ENCODE measurements at regions of chr5 and their contacts with region 1.

Region 1: GRCh38 chr5:158174918-158175851 is 316.2 kb upstream of the CLINT1 start:
- DNase-seq: peak; percentile 48
- ATAC-seq: peak; percentile 82
- H3K4me3 Mint-ChIP-seq: no peak overlapping the region
- H3K27ac Mint-ChIP-seq: no peak overlapping the region
- H3K4me1 Mint-ChIP-seq: peaks cover 33% of the 10 kb centered on the region
- H3K27me3 Mint-ChIP-seq: no peaks in the 10 kb centered on the region
- CTCF ChIP-seq: peak; percentile 76

Region 2: GRCh38 chr5:157820593-157821252 is 354.5 kb before region 1 on chr5:
- CTCF ChIA-PET with region 1: interaction called, 6 read pairs
- POLR2A ChIA-PET with region 1: no interaction called
- intact Hi-C with region 1: loop called (anchors 5 kb)
- DNase-seq: no peak
- ATAC-seq: no peak
- H3K4me3 Mint-ChIP-seq: no peak overlapping the region
- H3K27ac Mint-ChIP-seq: peak overlapping the region; percentile 12
- H3K4me1 Mint-ChIP-seq: peaks cover 25% of the 10 kb centered on the region
- H3K27me3 Mint-ChIP-seq: no peaks in the 10 kb centered on the region
- CTCF ChIP-seq: no peak

Region 3: GRCh38 chr5:158039911-158040347 is 135.3 kb before region 1 on chr5:
- CTCF ChIA-PET with region 1: no interaction called
- POLR2A ChIA-PET with region 1: no interaction called
- intact Hi-C with region 1: no loop called
- DNase-seq: no peak
- ATAC-seq: no peak
- H3K4me3 Mint-ChIP-seq: no peak overlapping the region
- H3K27ac Mint-ChIP-seq: no peak overlapping the region
- H3K4me1 Mint-ChIP-seq: no peaks in the 10 kb centered on the region
- H3K27me3 Mint-ChIP-seq: peaks cover 2% of the 10 kb centered on the region
- CTCF ChIP-seq: no peak

Region 4: DNA sequence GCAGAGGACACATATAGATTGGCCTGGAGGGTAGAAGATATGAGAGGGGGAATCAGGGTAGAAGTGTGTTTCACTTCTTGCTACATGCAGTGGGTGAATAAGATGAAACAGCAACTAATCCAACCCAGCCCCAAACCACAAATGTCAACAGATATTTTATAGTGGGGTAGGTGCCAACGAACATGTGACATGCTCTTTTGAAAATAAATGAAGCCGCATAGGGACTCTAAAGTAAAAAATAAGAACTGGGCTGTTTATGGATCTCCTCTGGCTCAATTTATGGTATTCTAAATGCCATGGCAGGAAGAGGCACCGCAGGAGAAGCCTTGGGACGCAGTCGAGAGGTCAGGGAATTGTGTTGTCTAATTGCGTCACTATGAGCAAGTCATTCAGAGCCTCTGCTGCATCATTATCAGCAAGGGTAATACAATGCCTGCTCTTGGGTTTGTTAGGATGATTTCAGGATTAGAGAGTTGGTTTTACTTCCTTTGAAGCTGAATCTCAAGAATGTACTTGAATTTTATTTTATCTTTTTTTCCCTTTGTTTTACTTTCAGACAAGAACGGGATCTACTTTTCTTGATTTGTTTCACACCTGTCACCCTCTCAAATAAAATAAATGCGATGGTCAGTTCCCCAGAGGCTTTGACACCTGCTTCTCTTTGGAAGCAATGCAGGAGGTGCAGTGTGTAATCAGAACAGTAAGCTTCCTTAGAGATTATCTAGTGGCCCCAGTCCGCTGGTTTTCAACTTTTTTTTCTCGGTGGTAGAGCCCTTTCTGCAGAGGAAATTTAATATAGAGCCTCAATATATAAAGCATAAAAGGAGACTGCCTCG is 59.4 kb after region 1 on chr5:
- CTCF ChIA-PET with region 1: no interaction called
- POLR2A ChIA-PET with region 1: no interaction called
- intact Hi-C with region 1: loop called (anchors 2 kb)
- DNase-seq: no peak
- ATAC-seq: peak; percentile 34
- H3K4me3 Mint-ChIP-seq: peak overlapping the region; percentile 55
- H3K27ac Mint-ChIP-seq: peak overlapping the region; percentile 68
- H3K4me1 Mint-ChIP-seq: peaks cover 17% of the 10 kb centered on the region
- H3K27me3 Mint-ChIP-seq: no peaks in the 10 kb centered on the region
- CTCF ChIP-seq: no peak

Region 5: GRCh38 chr5:158725297-158725851 is 550.2 kb after region 1 on chr5:
- CTCF ChIA-PET with region 1: no interaction called
- POLR2A ChIA-PET with region 1: no interaction called
- intact Hi-C with region 1: loop called (anchors 1 kb)
- DNase-seq: no peak
- ATAC-seq: no peak
- H3K4me3 Mint-ChIP-seq: no peak overlapping the region
- H3K27ac Mint-ChIP-seq: peak overlapping the region; percentile 19
- H3K4me1 Mint-ChIP-seq: peaks cover 29% of the 10 kb centered on the region
- H3K27me3 Mint-ChIP-seq: no peaks in the 10 kb centered on the region
- CTCF ChIP-seq: no peak

Region 6: DNA sequence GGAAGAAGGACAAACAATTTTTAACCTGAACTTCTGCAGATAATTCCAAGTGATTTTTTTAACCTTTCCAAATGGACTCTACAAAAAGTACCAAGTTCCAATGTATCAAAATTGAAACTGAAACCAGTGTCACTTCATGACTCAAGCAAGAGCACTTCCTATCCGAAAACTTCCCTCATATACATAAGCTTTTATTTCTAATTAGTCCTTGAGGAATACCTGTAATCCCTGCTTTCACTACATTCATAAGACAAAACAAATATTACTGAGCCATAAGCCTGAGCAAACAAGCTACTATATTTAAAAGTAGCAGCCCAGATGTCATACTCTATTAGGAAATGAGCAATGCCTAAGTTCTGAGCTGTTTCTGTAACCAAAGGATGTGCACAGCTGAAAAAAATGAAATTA is 700.1 kb after region 1 on chr5:
- CTCF ChIA-PET with region 1: interaction called, 4 read pairs
- POLR2A ChIA-PET with region 1: no interaction called
- intact Hi-C with region 1: loop called (anchors 10 kb)
- DNase-seq: no peak
- ATAC-seq: peak; percentile 36
- H3K4me3 Mint-ChIP-seq: peak overlapping the region; percentile 72
- H3K27ac Mint-ChIP-seq: peak overlapping the region; percentile 93
- H3K4me1 Mint-ChIP-seq: peaks cover 93% of the 10 kb centered on the region
- H3K27me3 Mint-ChIP-seq: no peaks in the 10 kb centered on the region
- CTCF ChIP-seq: no peak

Measured in activated B cell treated with CpG ODN at 0.5 μM for 24 hours (primary cell).